Esophagus squamous epithelium (tissue), 5 donors: ENCODE measurements at regions of chr1 and their contacts with region 1.

Region 1: GRCh38 chr1:220046052-220046930 is at the start of gene EPRS1:
- DNase-seq: peak; percentile 65
- H3K4me3 ChIP-seq: peak within 1 kb of the TSS; percentile 67 to 99 (median 88)
- H3K27ac ChIP-seq: peak within 1 kb of the TSS; percentile 81 to 95 (median 91)
- H3K4me1 ChIP-seq: peaks cover 10 to 25% (median 10%) of the 10 kb centered on the region in 3 donors
- H3K27me3 ChIP-seq: no peaks in the 10 kb centered on the region
- CTCF ChIP-seq: peak; percentile 58 to 94 (median 90)
- POLR2A ChIP-seq: peak in 3 of 4 donors; percentile 49 to 72 (median 63)
- total RNA-seq, gene EPRS1: 31.6 to 69.8 (median 51.9) TPM

Region 2: GRCh38 chr1:220089650-220090556 is 43.6 kb after region 1 on chr1 and contains the start of gene BPNT1:
- intact Hi-C with region 1: loop called (anchors 10 kb)
- DNase-seq: peak; percentile 54
- H3K4me3 ChIP-seq: peak within 1 kb of the TSS; percentile 33 to 74 (median 62)
- H3K27ac ChIP-seq: peak within 1 kb of the TSS; percentile 54 to 80 (median 76)
- H3K4me1 ChIP-seq: peaks cover 5 to 31% (median 15%) of the 10 kb centered on the region in 3 donors
- H3K27me3 ChIP-seq: no peaks in the 10 kb centered on the region
- CTCF ChIP-seq: peak in 2 of 6 experiments; percentile 11 to 51
- POLR2A ChIP-seq: peak in 2 of 4 donors; percentile 50 to 71
- total RNA-seq, gene BPNT1: 18.1 to 37.3 (median 23.3) TPM

Region 3: GRCh38 chr1:220511768-220512167 is 465.5 kb after region 1 on chr1:
- intact Hi-C with region 1: no loop called
- DNase-seq: no peak
- H3K4me3 ChIP-seq: no peak overlapping the region
- H3K27ac ChIP-seq: peak overlapping the region in 3 of 4 donors; percentile 2 to 11 (median 3)
- H3K4me1 ChIP-seq: peaks cover 0 to 38% (median 8%) of the 10 kb centered on the region in 3 donors
- H3K27me3 ChIP-seq: no peaks in the 10 kb centered on the region
- CTCF ChIP-seq: peak in 2 of 6 experiments; percentile 12 to 53
- POLR2A ChIP-seq: no peak